Body of pancreas (tissue), 4 donors: ENCODE measurements at regions of chr4 and their contacts with region 1.

Region 1: GRCh38 chr4:55358668-55359067 is 12.6 kb downstream of the SRD5A3 start:
- DNase-seq: peak in 1 of 4 donors; percentile 6
- ATAC-seq: peak; percentile 53
- H3K4me3 ChIP-seq: no peak overlapping the region
- H3K27ac ChIP-seq: no peak overlapping the region
- H3K4me1 ChIP-seq: peaks cover 5% of the 10 kb centered on the region
- H3K27me3 ChIP-seq: no peaks in the 10 kb centered on the region
- CTCF ChIP-seq: no peak
- POLR2A ChIP-seq: no peak

Region 2: DNA sequence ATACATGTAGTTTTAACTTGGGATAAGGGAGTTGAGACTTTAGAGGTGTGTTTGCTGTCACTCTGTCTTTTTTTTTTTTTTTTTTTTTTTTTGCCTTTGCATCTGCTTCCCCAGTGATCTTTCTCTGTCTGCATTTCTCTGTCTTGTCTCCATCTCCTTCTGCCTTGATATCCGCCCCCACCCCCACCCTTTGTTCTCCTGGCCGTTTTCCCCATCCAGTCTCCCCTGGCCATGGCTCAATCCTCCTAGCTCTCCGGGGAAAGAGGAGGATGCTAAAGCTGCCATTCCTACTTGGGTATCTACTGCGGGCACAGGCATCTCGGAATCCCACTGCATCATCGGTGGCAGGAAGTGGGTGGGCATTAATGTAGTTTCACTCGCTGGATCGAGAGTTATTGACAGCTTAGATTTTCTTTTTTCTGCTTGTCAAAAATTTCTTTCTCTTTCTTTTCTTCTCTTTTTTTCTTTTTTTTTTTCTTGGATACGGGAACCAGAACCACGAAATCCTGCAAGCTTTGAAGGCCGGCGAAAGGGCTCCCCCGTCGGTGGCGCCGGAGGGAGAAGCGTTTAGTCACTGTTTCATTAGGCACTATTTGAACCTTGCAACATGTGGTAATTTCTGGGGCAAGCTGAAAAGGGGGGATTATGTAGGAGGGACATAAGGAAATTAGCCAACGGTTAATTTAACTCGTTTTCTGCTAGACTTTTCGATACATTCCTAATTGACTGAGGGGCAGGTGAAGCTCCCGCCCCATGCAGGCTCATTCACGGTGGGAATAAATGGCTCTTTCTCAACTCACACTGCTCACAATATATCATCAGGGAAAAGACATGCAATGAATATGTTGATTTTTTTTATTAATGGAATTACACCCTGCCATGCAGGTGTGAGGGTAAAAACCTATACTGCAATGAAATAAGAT is 1250.5 kb before region 1 on chr4:
- intact Hi-C with region 1: no loop called
- DNase-seq: no peak
- ATAC-seq: no peak
- H3K4me3 ChIP-seq: no peak overlapping the region
- H3K27ac ChIP-seq: no peak overlapping the region
- H3K4me1 ChIP-seq: peaks cover 8% of the 10 kb centered on the region
- H3K27me3 ChIP-seq: peaks cover 0 to 13% of the 10 kb centered on the region in 2 donors
- CTCF ChIP-seq: no peak
- POLR2A ChIP-seq: no peak

Region 3: GRCh38 chr4:55554453-55555030 is 195.9 kb after region 1 on chr4:
- intact Hi-C with region 1: loop called (anchors 10 kb)
- DNase-seq: peak in 1 of 4 donors; percentile 15
- ATAC-seq: peak; percentile 50
- H3K4me3 ChIP-seq: no peak overlapping the region
- H3K27ac ChIP-seq: no peak overlapping the region
- H3K4me1 ChIP-seq: no peaks in the 10 kb centered on the region
- H3K27me3 ChIP-seq: no peaks in the 10 kb centered on the region
- CTCF ChIP-seq: peak in 6 of 7 experiments; percentile 31 to 60 (median 48)
- POLR2A ChIP-seq: no peak